Cardiac septum (tissue), 1 donor: ENCODE measurements at regions of chrX and their contacts with region 1.

Region 1: GRCh38 chrX:8743126-8743732 is 11.3 kb upstream of the ANOS1 start:
- DNase-seq: no peak

Region 2: DNA sequence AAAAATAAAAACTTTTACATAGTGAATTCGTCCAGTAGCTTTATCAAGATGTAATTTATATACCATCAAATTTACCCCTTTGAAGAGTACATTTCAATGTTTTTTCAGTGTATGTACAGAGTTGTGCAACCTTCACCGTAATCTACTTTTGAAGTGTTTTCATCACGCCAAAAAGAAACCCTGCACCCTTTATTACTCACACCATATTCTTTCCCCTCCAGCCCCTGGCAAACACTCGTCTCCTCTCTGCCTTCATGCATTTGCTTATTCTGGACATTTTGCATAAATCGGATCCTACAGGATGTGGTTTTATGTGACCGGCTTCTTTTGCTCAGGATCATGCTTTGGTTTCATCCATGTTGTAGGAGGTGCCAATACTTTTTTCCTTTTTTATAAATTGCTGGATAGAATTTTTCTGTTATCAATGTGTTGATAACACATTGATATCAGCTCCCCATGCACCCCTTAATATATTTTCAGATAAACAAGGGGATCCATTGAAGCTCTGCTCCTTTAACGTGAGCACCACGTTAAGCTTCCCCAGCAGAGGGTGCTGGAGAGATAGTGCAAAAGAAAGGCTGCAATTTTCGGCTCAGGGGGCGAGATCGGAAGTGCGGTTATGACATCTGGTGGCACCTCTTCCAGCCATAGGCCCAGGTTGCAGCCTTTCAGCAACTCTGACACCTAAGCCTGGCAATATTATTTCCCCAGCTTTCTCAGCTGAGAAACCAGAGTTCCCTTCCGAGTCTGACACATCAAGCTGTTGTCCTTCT is 378.7 kb before region 1 on chrX:
- intact Hi-C with region 1: loop called (anchors 10 kb)
- DNase-seq: no peak

Region 3: DNA sequence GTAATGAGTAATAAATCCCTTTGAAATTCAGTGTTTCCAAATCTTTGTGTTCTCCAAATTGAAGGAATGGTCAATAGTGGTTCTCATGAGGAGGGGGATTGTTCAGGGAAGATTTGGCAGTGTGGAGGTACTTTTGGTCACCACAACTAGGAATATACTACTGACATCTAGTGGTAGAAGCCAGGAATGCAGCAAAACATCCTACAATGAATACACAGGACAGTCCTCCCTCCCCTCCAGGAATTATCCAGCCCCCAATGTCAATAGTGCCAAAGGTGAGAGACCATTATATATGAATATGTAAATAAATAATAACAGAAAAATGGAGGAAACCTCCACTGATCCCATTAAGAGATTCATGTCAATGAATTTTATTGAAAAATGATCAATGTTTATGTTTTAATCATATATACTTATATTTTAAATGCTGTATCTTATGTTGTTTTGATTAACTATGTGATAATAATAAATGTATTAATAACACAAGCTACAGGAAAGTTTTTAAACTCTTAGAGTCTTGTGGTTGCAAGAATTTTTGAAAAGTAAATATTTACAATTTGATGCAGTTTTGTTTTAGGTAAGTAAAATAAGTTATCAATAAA is 72.3 kb after region 1 on chrX:
- intact Hi-C with region 1: loop called (anchors 10 kb)
- DNase-seq: no peak